PC-9 (cell line): ENCODE measurements at regions of chr15 and their contacts with region 1.

Region 1: GRCh38 chr15:73972984-73973682 is 19.0 kb downstream of the STOML1 start:
- DNase-seq: peak; percentile 68 to 84
- H3K4me3 ChIP-seq: peak overlapping the region; percentile 37; the same call in 1 of the 2 replicates
- H3K27ac ChIP-seq: no peak overlapping the region
- H3K4me1 ChIP-seq: 0 out of 2 replicates have a peak, but pooled peaks cover 4% of the 10 kb centered on the region
- H3K27me3 ChIP-seq: no peaks in the 10 kb centered on the region
- CTCF ChIP-seq: peak; percentile 81

Region 2: GRCh38 chr15:73950831-73951561 is 22.1 kb before region 1 on chr15:
- CTCF ChIA-PET with region 1: interaction called, 5 read pairs
- POLR2A ChIA-PET with region 1: interaction called, 25 read pairs
- intact Hi-C with region 1: no loop called
- DNase-seq: peak in 1 of 2 experiments; percentile 79
- H3K4me3 ChIP-seq: no peak overlapping the region
- H3K27ac ChIP-seq: no peak overlapping the region
- H3K4me1 ChIP-seq: peaks cover 9% of the 10 kb centered on the region
- H3K27me3 ChIP-seq: no peaks in the 10 kb centered on the region
- CTCF ChIP-seq: peak; percentile 54

Region 3: GRCh38 chr15:74047781-74048180 is 74.6 kb after region 1 on chr15:
- CTCF ChIA-PET with region 1: interaction called, 11 read pairs
- POLR2A ChIA-PET with region 1: interaction called, 3 read pairs
- intact Hi-C with region 1: no loop called
- DNase-seq: no peak
- H3K4me3 ChIP-seq: no peak overlapping the region
- H3K27ac ChIP-seq: no peak overlapping the region
- H3K4me1 ChIP-seq: peaks cover 31% of the 10 kb centered on the region
- H3K27me3 ChIP-seq: no peaks in the 10 kb centered on the region
- CTCF ChIP-seq: no peak

Region 4: GRCh38 chr15:74307827-74308644 is 334.9 kb after region 1 on chr15:
- CTCF ChIA-PET with region 1: interaction called, 22 read pairs
- POLR2A ChIA-PET with region 1: interaction called, 4 read pairs
- intact Hi-C with region 1: loop called (anchors 5 kb)
- DNase-seq: peak; percentile 59 to 68
- H3K4me3 ChIP-seq: no peak overlapping the region
- H3K27ac ChIP-seq: no peak overlapping the region
- H3K4me1 ChIP-seq: peaks cover 6% of the 10 kb centered on the region; the same call in 1 of the 2 replicates
- H3K27me3 ChIP-seq: no peaks in the 10 kb centered on the region
- CTCF ChIP-seq: peak; percentile 84